Astrocyte of the cerebellum (primary cell): ENCODE measurements at regions of chr6 and their contacts with region 1.

Region 1: GRCh38 chr6:47477497-47478232 is at the start of gene CD2AP:
- DNase-seq: peak; percentile 57
- H3K4me3 ChIP-seq: peak within 1 kb of the TSS; percentile 79
- CTCF ChIP-seq: no peak

Region 2: GRCh38 chr6:47535316-47536225 is 57.9 kb after region 1 on chr6:
- in situ Hi-C with region 1: loop called (anchors 5 kb)
- DNase-seq: no peak
- H3K4me3 ChIP-seq: no peak overlapping the region
- CTCF ChIP-seq: no peak

Region 3: GRCh38 chr6:47581591-47581990 is 103.9 kb after region 1 on chr6:
- in situ Hi-C with region 1: loop called (anchors 5 kb)
- DNase-seq: no peak
- H3K4me3 ChIP-seq: no peak overlapping the region
- CTCF ChIP-seq: no peak